ENCODE measurements at regions of chr15 and their contacts with region 1.

Region 1: GRCh38 chr15:42736793-42737528 is at the start of gene CDAN1:
- DNase-seq: no peak
- H3K4me3 ChIP-seq: peak within 1 kb of the TSS; percentile 68 to 99 (median 82)
- H3K27ac ChIP-seq: peak within 1 kb of the TSS; percentile 80 to 97 (median 94)
- H3K4me1 ChIP-seq: peaks cover 10 to 28% (median 13%) of the 10 kb centered on the region in 3 donors
- H3K27me3 ChIP-seq: no peaks in the 10 kb centered on the region
- CTCF ChIP-seq: peak in 1 of 6 experiments; percentile 25
- POLR2A ChIP-seq: peak in 3 of 4 donors; percentile 21 to 86 (median 57)
- total RNA-seq, gene CDAN1: 7.8 to 9.7 (median 8.6) TPM

Region 2: DNA sequence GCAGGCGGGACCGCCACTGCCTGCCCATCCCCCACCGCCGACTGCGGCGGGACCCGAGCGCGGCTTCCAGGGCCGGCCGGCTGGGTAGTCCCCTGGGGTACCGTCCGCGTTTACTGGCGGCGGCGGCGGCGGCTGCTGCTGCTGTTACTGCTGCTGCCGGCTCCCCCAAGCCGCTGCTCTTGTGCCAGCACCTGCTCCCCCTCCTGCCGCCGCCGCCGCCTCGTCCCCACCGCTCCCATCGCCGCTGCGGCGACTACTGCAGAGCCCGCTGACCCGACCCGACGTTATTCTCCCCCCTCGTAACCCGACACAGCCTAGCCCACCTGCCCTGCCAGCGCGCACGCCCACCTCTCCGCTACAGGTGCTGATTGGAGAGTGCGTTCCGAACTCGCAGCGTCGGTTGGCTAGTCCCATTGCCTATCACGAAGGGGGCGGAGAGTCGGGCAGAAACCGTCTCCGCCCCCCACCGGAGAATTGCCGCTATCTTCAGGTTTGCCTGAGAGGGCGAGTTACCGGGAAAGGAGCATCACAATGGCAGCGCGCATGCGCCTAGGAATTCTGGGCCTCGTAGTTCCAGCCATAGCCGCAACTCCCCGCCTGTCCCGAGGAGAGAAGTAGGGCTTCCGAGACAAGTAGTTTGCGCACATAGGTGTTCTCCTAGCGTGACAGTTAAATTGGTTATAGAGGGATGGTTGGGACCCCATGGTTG is 183.7 kb after region 1 on chr15 and contains the start of gene TTBK2:
- intact Hi-C with region 1: loop called (anchors 10 kb)
- DNase-seq: peak; percentile 85
- H3K4me3 ChIP-seq: peak within 1 kb of the TSS; percentile 85 to 98 (median 89)
- H3K27ac ChIP-seq: peak within 1 kb of the TSS; percentile 86 to 91 (median 88)
- H3K4me1 ChIP-seq: peaks cover 7 to 33% (median 10%) of the 10 kb centered on the region in 3 donors
- H3K27me3 ChIP-seq: no peaks in the 10 kb centered on the region
- CTCF ChIP-seq: peak in 3 of 6 experiments; percentile 17 to 48 (median 28)
- POLR2A ChIP-seq: peak in 3 of 4 donors; percentile 28 to 84 (median 81)
- total RNA-seq, gene TTBK2: 5.8 to 11.8 (median 6.8) TPM

Measured in esophagus squamous epithelium (tissue), 5 donors.